Activated CD4-positive, alpha-beta memory T cell treated with anti-CD3 and anti-CD28 coated beads for 36 hours (primary cell): ENCODE measurements at regions of chr11 and their contacts with region 1.

Region 1: GRCh38 chr11:12224537-12224893 is 114.1 kb downstream of the MICAL2 start:
- DNase-seq: peak; percentile 98
- H3K4me3 Mint-ChIP-seq: peak overlapping the region; percentile 78
- H3K27ac Mint-ChIP-seq: peak overlapping the region; percentile 98
- H3K4me1 Mint-ChIP-seq: peaks cover 52% of the 10 kb centered on the region
- H3K27me3 Mint-ChIP-seq: no peaks in the 10 kb centered on the region

Region 2: GRCh38 chr11:11608783-11609232 is 615.7 kb before region 1 on chr11:
- CTCF ChIA-PET with region 1: no interaction called
- POLR2A ChIA-PET with region 1: no interaction called
- intact Hi-C with region 1: no loop called
- DNase-seq: no peak
- H3K4me3 Mint-ChIP-seq: no peak overlapping the region
- H3K27ac Mint-ChIP-seq: no peak overlapping the region
- H3K4me1 Mint-ChIP-seq: no peaks in the 10 kb centered on the region
- H3K27me3 Mint-ChIP-seq: peaks cover 15% of the 10 kb centered on the region

Region 3: DNA sequence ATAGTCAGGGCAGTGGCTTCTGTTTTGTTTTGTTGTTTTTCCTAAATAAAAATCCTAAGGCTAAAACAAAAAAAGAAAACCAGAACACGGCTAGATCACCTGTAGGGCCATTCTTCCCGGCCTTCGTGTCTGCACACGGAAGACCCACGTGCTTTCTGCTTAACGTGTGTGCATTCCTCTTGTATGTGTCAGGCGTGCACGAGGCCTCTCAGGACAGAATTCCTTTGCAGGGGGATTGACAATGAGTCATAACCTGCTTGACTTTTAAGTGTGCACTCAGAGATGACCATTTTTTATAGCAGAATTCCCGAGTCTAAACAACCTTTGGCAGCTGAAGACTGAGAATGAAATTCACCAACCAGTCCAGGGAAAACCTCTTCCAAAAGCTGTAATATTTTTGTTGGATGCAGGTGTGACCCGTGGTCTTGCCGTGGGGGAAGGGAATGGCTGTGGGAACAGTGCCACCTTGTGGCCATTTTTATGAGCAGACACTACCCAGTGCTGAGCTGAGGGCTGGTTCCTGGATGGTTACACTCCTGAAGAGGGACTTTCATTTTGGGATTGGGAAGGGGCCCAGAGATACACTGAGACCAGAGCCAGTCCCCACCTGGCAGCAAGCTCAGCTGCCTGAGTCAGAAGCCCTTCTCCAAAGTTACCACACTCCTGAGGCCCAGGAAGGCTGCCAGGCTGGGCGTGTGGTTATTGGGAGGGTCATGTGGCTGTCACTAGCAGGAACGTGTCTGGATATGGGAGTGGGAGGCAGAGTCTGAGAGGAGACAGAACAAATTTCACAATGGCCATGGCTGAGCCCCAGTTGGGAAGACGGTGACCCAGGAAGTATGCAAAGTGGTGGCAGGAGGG is 180.3 kb before region 1 on chr11:
- CTCF ChIA-PET with region 1: interaction called, 11 read pairs
- POLR2A ChIA-PET with region 1: no interaction called
- intact Hi-C with region 1: no loop called
- DNase-seq: peak; percentile 76
- H3K4me3 Mint-ChIP-seq: no peak overlapping the region
- H3K27ac Mint-ChIP-seq: no peak overlapping the region
- H3K4me1 Mint-ChIP-seq: peaks cover 4% of the 10 kb centered on the region
- H3K27me3 Mint-ChIP-seq: peaks cover 1% of the 10 kb centered on the region

Region 4: DNA sequence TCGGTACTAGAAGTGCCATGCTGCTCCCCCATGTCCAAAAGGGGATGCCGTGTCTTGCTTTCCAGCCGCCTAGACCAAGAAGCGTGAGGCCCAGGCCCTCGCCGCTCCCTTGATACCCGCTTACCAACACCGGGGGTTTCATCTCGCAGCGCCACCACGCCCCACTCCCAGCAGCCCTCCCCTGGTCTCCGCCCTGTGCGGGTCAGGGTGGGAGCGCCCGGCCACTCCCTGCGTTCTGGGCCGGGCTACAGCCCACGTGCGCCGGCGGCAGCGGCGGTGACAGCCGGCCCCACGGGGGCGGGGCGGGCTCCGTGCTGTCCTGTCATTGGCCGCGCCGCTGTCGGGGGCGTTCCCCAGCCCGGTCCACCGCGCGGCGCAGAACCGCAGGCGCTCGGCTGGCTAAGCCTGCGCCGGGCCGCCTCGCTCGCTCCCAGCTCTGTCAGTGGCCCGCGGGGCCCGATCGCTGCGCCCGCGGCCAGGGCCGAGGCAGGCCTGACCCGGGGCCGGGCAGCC is 114.3 kb before region 1 on chr11 and contains the start of gene MICAL2:
- CTCF ChIA-PET with region 1: no interaction called
- POLR2A ChIA-PET with region 1: interaction called, 8 read pairs
- intact Hi-C with region 1: loop called (anchors 1 kb)
- DNase-seq: peak; percentile 91
- H3K4me3 Mint-ChIP-seq: peak within 1 kb of the TSS; percentile 82
- H3K27ac Mint-ChIP-seq: peak within 1 kb of the TSS; percentile 91
- H3K4me1 Mint-ChIP-seq: peaks cover 40% of the 10 kb centered on the region
- H3K27me3 Mint-ChIP-seq: no peaks in the 10 kb centered on the region
- total RNA-seq, gene MICAL2: 213 to 220 TPM

Region 5: GRCh38 chr11:12185914-12186313 is 38.6 kb before region 1 on chr11:
- CTCF ChIA-PET with region 1: interaction called, 4 read pairs
- POLR2A ChIA-PET with region 1: interaction called, 33 read pairs
- intact Hi-C with region 1: loop called (anchors 1 kb)
- DNase-seq: no peak
- H3K4me3 Mint-ChIP-seq: no peak overlapping the region
- H3K27ac Mint-ChIP-seq: no peak overlapping the region
- H3K4me1 Mint-ChIP-seq: peaks cover 37% of the 10 kb centered on the region
- H3K27me3 Mint-ChIP-seq: no peaks in the 10 kb centered on the region

Region 6: DNA sequence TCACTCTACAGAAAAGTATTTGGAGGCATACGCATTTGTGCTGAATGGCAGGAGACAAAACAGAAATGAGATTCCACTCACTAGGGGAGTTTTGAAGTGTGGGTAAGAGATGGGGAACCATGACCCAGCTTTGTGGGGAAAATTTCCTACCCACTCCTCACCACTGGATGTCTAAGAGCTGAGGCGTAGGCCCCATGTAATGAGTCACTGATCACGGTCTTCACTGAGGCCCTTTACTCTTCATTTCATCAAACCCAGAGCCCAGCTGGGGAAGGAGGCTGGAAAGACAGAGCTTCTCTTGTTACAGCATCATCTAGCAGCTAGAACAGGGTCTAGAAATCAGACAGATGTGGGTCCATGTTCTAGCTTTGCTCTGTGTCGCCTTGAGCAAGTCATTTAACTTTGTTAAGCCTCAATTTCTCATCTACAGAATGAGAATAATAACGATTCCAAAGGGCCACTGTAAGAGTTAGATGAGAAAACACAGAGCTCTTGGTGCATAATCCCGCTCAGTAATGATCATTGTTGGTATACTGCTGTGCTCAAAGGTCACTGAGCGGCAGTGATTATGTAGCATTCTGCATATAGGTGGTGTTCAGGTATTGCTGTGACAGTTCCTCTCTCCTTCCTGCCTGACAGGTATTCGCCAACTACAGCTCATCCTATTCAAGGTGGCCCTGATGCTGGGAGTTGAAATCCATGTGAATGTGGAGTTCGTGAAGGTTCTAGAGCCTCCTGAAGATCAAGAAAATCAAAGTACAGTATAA is 16.9 kb before region 1 on chr11:
- CTCF ChIA-PET with region 1: interaction called, 14 read pairs
- POLR2A ChIA-PET with region 1: interaction called, 44 read pairs
- intact Hi-C with region 1: loop called (anchors 1 kb)
- DNase-seq: peak; percentile 84
- H3K4me3 Mint-ChIP-seq: peak overlapping the region; percentile 14
- H3K27ac Mint-ChIP-seq: peak overlapping the region; percentile 87
- H3K4me1 Mint-ChIP-seq: peaks cover 69% of the 10 kb centered on the region
- H3K27me3 Mint-ChIP-seq: no peaks in the 10 kb centered on the region

Region 7: DNA sequence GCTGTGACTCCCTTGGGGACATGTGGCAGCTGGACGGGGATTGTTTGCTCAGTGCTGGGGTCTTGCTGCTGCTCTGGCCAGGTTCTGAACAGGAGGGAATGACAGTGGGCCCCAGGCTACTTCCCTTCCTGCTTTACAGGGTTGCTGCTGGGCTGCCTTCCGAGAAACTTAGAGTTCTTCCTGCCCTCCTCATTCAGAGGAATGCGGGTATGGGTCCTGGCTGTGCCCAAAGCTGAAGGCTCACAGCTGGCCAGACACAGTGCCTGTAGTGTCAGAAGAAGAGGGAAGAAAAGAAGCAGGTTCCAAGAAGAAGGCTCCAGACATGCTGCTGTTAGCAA is 44.6 kb after region 1 on chr11:
- CTCF ChIA-PET with region 1: no interaction called
- POLR2A ChIA-PET with region 1: no interaction called
- intact Hi-C with region 1: no loop called
- DNase-seq: no peak
- H3K4me3 Mint-ChIP-seq: no peak overlapping the region
- H3K27ac Mint-ChIP-seq: no peak overlapping the region
- H3K4me1 Mint-ChIP-seq: no peaks in the 10 kb centered on the region
- H3K27me3 Mint-ChIP-seq: no peaks in the 10 kb centered on the region

Region 8: GRCh38 chr11:12319988-12320387 is 95.5 kb after region 1 on chr11:
- CTCF ChIA-PET with region 1: no interaction called
- POLR2A ChIA-PET with region 1: no interaction called
- intact Hi-C with region 1: no loop called
- DNase-seq: no peak
- H3K4me3 Mint-ChIP-seq: no peak overlapping the region
- H3K27ac Mint-ChIP-seq: no peak overlapping the region
- H3K4me1 Mint-ChIP-seq: peaks cover 14% of the 10 kb centered on the region
- H3K27me3 Mint-ChIP-seq: no peaks in the 10 kb centered on the region

Region 9: DNA sequence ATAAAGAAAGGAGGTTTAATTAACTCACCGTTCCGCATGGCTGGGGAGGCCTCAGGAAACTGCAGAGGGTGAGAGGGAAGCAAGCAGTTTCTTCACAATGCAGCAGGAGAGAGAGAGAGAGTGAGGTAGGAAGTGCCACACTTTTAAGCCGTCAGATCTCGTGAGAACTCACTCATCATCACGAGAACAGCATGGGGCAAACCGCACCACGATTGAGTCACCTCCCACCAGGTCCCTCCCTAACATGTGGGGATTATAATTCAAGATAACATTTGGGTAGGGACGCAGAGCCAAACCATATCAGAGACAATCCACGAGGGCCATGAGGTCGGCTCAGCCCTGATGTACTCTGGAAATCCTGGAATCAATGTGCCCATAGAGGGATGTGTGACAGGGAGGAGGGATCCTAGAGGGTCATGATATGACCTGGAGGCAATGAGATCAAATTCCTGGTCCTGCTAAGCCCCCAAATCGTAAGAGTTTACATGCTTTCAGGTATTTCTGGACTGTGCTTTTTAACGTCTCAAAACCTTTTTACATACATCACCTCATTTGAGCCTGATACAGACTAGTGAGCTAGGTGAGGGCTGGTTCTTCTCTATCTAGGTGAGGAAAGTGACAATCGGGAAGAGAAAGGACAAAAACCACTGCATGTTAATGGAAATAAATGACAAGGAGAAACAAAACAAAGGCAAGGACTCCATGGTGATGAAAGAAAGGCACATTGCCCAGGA is 765.1 kb after region 1 on chr11:
- CTCF ChIA-PET with region 1: no interaction called
- POLR2A ChIA-PET with region 1: no interaction called
- intact Hi-C with region 1: no loop called
- DNase-seq: no peak
- H3K4me3 Mint-ChIP-seq: no peak overlapping the region
- H3K27ac Mint-ChIP-seq: no peak overlapping the region
- H3K4me1 Mint-ChIP-seq: no peaks in the 10 kb centered on the region
- H3K27me3 Mint-ChIP-seq: peaks cover 7% of the 10 kb centered on the region